Right cardiac atrium (tissue), 5 donors: ENCODE measurements at regions of chr6 and their contacts with region 1.

Region 1: DNA sequence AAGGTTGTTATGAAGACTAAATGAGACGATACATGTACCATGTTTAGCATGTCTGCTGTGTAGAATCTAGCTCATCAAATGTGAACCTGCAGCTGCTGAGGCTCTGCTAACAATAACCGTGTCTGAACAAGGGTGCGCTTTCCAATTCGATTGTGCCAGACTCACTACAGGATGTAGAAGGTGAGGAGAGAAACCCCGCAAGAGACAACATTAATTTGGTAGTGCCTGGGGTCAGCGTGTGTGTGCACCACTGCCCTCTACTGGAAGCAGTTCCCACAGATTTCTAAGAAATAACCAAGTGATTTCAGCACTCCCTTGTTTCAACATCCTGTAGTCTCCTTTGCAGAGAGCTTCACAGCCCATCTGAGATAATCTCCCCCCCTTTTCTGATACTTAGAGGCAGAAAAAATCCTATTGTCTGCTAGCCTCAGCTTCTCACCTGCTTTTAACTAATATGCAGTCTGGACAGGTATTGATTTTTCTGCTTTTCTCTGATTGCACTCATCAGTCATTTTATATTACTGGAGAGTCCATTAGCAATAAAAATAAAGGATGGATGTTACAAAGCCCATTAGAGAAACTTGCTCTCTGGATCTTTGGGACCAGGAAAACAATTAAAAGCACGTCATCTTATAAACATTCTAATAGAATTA is 96.7 kb upstream of the BACH2 start:
- DNase-seq: peak; percentile 38 to 64 (median 54)
- ATAC-seq: peak; percentile 78 to 83
- H3K4me3 ChIP-seq: no peak overlapping the region
- H3K27ac ChIP-seq: no peak overlapping the region
- H3K4me1 ChIP-seq: no peaks in the 10 kb centered on the region
- H3K27me3 ChIP-seq: no peaks in the 10 kb centered on the region

Region 2: GRCh38 chr6:89970609-89971337 is 422.6 kb before region 1 on chr6:
- intact Hi-C with region 1: loop called (anchors 5 to 10 kb)
- DNase-seq: peak in 1 of 3 donors; percentile 56
- ATAC-seq: peak; percentile 68 to 80
- H3K4me3 ChIP-seq: no peak overlapping the region
- H3K27ac ChIP-seq: no peak overlapping the region
- H3K4me1 ChIP-seq: no peaks in the 10 kb centered on the region
- H3K27me3 ChIP-seq: no peaks in the 10 kb centered on the region

Region 3: GRCh38 chr6:90098001-90098531 is 295.3 kb before region 1 on chr6:
- intact Hi-C with region 1: loop called in 1 of 4 experiments (anchors 10 kb)
- DNase-seq: peak; percentile 69 to 81 (median 72)
- ATAC-seq: peak; percentile 95 to 96
- H3K4me3 ChIP-seq: no peak overlapping the region
- H3K27ac ChIP-seq: peak overlapping the region; percentile 8
- H3K4me1 ChIP-seq: no peaks in the 10 kb centered on the region
- H3K27me3 ChIP-seq: no peaks in the 10 kb centered on the region

Region 4: GRCh38 chr6:90251295-90251992 is 141.9 kb before region 1 on chr6:
- intact Hi-C with region 1: no loop called
- DNase-seq: no peak
- ATAC-seq: no peak
- H3K4me3 ChIP-seq: no peak overlapping the region
- H3K27ac ChIP-seq: no peak overlapping the region
- H3K4me1 ChIP-seq: peaks cover 2% of the 10 kb centered on the region
- H3K27me3 ChIP-seq: no peaks in the 10 kb centered on the region

Region 5: GRCh38 chr6:90350689-90351554 is 42.4 kb before region 1 on chr6:
- intact Hi-C with region 1: no loop called
- DNase-seq: no peak
- ATAC-seq: no peak
- H3K4me3 ChIP-seq: no peak overlapping the region
- H3K27ac ChIP-seq: no peak overlapping the region
- H3K4me1 ChIP-seq: no peaks in the 10 kb centered on the region
- H3K27me3 ChIP-seq: no peaks in the 10 kb centered on the region

Region 6: GRCh38 chr6:90478789-90479602 is 85.6 kb after region 1 on chr6:
- intact Hi-C with region 1: loop called in 2 of 4 experiments (anchors 5 to 10 kb)
- DNase-seq: peak; percentile 89 to 93 (median 91)
- ATAC-seq: peak; percentile 99 to 100
- H3K4me3 ChIP-seq: no peak overlapping the region
- H3K27ac ChIP-seq: no peak overlapping the region
- H3K4me1 ChIP-seq: peaks cover 3% of the 10 kb centered on the region
- H3K27me3 ChIP-seq: no peaks in the 10 kb centered on the region